ENCODE measurements at regions of chr5 and their contacts with region 1.

Region 1: DNA sequence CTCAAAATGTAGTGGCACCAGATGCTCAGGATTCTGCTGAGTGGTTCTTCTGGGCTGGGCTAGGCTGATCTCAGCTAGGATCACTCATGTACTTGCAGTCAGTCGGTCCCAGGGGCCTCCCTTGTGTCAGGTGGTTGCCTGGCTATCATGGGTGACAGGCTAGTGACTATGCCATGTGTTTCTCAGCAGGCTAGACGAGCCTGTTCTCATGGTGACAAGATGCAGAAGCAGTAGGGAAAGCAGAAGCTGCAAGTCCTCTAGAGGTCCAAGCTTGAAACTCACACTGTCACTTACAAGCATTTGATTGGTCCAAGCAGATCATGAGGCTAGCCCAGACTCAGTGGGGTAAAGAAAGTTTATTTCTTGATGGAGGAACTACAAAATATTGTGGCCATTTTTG is 15.2 kb upstream of the KCNMB1 start:
- DNase-seq: peak; percentile 24

Region 2: GRCh38 chr5:170253844-170254455 is 150.5 kb before region 1 on chr5:
- in situ Hi-C with region 1: no loop called
- DNase-seq: no peak

Region 3: DNA sequence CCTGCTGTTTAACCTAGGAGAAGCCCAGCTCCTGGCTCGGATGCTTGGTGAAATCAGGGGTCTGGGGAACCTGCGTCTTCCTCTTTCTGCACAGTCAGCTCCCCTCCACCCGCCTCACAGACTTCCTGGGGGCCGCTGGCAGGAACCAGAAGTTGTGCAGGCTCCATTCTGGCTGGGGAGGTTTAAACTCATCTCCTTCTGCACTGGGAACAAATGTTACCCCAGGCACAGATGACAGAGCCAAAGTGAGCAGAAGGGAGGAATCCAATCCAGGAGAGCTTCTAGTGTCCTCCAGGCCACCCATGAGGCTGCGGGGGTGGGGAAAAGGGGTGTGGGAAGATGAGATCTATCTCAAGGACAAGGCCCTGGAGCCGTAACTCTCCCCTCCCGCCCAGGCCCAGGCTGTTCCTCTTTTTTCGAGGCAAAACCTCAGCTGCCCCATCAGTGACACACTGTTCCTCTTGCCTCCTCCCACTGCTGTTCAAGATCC is 46.4 kb before region 1 on chr5:
- in situ Hi-C with region 1: loop called (anchors 10 kb)
- DNase-seq: peak; percentile 89

Region 4: DNA sequence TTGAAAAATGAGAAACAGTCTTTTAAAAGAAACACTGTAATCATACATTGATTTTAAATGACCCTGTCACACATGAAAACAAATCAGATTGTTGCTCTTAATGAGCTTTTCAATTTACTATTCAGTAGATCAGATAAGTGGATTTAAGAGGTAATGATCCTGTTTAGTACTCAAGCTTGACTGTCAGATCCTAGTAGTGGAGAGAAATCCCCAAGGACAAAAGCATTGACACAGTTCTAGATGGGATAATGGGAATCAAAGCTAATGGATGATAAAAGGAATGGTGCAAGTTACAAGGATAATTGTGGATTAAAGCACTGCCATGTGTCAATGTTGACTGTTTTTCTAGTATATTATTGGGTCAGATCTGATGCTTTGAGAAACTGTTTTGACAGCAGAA is 762.4 kb after region 1 on chr5:
- in situ Hi-C with region 1: no loop called
- DNase-seq: no peak